Activated CD4-positive, alpha-beta T cell treated with anti-CD3 and anti-CD28 coated beads for 36 hours (primary cell): ENCODE measurements at regions of chr11 and their contacts with region 1.

Region 1: DNA sequence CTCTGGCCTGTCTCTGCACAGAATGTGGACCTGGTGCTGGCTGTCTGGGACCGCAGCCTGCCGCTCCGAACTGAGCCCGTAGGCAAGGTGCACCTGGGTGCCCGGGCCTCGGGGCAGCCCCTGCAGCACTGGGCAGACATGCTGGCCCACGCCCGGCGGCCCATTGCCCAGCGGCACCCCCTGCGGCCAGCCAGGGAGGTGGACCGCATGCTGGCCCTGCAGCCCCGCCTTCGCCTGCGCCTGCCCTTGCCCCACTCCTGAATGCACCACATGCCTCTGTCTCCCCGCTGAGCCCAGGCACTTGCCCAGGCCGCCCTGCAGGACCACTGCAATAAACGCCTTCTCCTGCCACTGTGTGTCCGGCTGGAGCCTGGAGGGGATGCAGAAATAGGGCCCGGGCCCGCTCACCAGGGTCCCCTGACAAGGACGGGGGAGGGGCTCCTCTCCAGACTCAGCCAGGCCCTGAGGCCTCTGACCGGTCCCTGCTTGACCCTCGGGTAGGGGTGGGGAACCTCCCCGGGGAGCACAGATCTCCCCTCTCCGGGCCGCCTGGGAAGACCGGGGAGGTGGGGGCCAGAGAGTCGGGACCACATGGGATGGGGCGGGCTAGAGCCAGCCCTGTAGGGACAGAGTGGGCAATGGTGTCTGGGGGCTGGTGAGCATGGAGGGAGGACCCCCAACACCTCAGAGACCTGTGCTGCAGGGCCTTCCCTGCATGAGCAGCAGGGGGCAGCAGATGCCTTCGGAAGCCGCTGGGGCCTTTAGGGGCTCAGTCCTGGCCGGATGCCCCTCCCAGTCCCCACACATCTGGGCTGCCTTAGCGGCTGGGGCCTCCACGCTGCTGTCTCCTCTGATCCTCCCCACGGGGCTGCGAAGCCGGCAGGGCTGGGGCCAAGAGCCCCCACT is 1.4 kb upstream of the TNNI2 start:
- DNase-seq: peak; percentile 89
- ATAC-seq: peak; percentile 91
- H3K4me3 Mint-ChIP-seq: no peak overlapping the region
- H3K27ac Mint-ChIP-seq: no peak overlapping the region
- H3K4me1 Mint-ChIP-seq: no peaks in the 10 kb centered on the region
- H3K27me3 Mint-ChIP-seq: no peaks in the 10 kb centered on the region

Region 2: DNA sequence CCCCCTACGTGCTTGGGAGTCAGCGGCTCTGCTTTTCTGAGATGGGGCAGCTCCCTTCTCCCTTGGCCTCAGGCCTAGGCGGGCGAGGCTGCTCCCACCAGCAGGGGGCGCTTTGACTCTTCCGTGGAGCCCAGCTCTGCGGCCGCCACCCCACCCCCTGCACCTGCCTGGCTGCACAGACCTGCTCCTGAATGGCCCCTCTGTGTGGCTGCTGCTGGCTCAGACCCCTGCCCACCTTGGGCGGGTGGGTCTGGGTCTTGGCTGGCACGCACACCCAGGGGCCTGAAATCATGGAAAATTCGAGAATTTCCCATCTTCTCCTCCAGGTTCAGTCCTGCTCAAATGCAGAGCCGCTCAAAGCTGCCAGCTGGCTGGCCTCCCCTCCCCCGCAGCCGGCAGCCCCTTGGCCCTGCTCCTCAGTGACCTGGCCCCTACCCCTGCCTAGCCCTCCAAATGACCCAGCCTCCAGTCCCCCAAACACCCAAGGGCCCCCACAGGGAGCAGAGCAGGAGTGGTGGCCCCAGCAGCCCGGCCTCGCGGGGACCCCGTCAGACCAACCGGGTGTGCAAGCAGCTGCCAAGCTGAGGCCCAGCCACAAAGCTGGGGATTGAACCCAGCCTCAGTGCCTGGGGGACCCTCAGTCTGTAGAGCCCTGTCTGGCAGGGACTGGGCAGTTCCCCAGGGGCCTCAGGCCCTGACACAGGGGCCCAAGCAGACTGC is 45.3 kb after region 1 on chr11:
- CTCF ChIA-PET with region 1: interaction called, 13 read pairs
- POLR2A ChIA-PET with region 1: no interaction called
- intact Hi-C with region 1: loop called (anchors 1 to 5 kb)
- DNase-seq: peak; percentile 92
- ATAC-seq: peak; percentile 93
- H3K4me3 Mint-ChIP-seq: no peak overlapping the region
- H3K27ac Mint-ChIP-seq: no peak overlapping the region
- H3K4me1 Mint-ChIP-seq: peaks cover 2% of the 10 kb centered on the region
- H3K27me3 Mint-ChIP-seq: no peaks in the 10 kb centered on the region

Region 3: GRCh38 chr11:2208691-2209369 is 371.4 kb after region 1 on chr11:
- CTCF ChIA-PET with region 1: no interaction called
- POLR2A ChIA-PET with region 1: no interaction called
- intact Hi-C with region 1: no loop called
- DNase-seq: no peak
- ATAC-seq: no peak
- H3K4me3 Mint-ChIP-seq: no peak overlapping the region
- H3K27ac Mint-ChIP-seq: no peak overlapping the region
- H3K4me1 Mint-ChIP-seq: peaks cover 7% of the 10 kb centered on the region
- H3K27me3 Mint-ChIP-seq: no peaks in the 10 kb centered on the region